ENCODE measurements at regions of chr2 and their contacts with region 1.

Region 1: GRCh38 chr2:170815746-170816503 is 762 bp upstream of the GAD1 start:
- DNase-seq: peak; percentile 57
- ATAC-seq: peak; percentile 78
- H3K4me3 ChIP-seq: peak overlapping the region; percentile 53 to 67
- H3K27ac ChIP-seq: no peak overlapping the region; the same call in 1 of the 2 replicates
- H3K4me1 ChIP-seq: peaks cover 3 to 25% of the 10 kb centered on the region in 2 experiments; a peak in 3 of 4 replicates
- H3K27me3 ChIP-seq: no peaks in the 10 kb centered on the region
- CTCF ChIP-seq: peak; percentile 79 to 92 (median 83)
- POLR2A ChIP-seq: no peak
- RAD21 ChIP-seq: peak; percentile 94

Region 2: GRCh38 chr2:170235860-170236679 is 579.9 kb before region 1 on chr2:
- CTCF ChIA-PET with region 1: interaction called, 6 read pairs
- POLR2A ChIA-PET with region 1: no interaction called
- RAD21 ChIA-PET with region 1: no interaction called
- intact Hi-C with region 1: loop called (anchors 1 kb)
- DNase-seq: peak; percentile 60
- ATAC-seq: peak; percentile 76
- H3K4me3 ChIP-seq: no peak overlapping the region
- H3K27ac ChIP-seq: no peak overlapping the region
- H3K4me1 ChIP-seq: peaks cover 3 to 12% of the 10 kb centered on the region in 2 experiments; a peak in 2 of 4 replicates
- H3K27me3 ChIP-seq: peaks cover 19% of the 10 kb centered on the region
- CTCF ChIP-seq: peak; percentile 53 to 81 (median 67); a peak in 5 of 6 replicates
- POLR2A ChIP-seq: no peak
- RAD21 ChIP-seq: peak; percentile 84

Region 3: DNA sequence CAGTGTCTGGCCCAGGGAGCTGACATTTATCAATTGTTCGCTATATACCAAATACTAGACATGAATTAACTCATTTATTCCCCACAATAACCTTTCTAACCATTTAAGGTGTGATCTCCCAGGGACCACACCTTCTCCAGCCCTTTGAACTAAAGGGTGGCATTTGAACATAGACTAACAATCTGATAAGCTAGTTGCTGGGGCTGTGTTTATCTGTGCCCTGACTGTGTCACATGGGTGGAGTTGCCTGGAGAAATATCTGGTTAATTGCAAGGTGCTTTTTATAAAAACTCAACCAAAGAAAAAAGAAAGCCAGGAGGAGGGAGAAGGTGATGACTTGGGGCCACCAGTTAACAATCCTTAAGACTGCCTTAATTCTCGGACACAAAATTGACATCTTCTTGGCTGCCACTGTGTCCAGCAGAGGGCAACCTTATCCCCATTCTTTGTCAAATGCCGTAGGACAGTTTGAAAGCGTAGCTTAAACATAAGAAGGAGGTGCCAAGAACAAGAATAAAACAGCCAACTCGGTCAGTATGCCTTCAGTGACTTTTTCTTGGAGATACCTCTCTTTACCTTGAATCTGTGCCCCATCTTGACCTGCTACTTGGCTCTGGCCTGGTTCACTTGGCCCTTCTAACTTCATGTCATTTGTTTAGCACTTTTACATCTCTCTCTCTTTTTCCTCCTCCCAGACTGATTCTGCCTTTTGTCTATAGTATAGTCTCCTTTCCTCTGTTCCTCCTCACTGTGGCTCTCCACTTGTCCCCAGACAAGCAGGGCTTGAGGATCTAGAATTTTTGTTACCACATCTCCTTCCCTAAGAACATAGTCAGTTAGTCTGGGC is 454.6 kb before region 1 on chr2:
- CTCF ChIA-PET with region 1: interaction called, 45 read pairs
- POLR2A ChIA-PET with region 1: no interaction called
- RAD21 ChIA-PET with region 1: interaction called in 1 of 2 experiments, 4 read pairs
- intact Hi-C with region 1: loop called (anchors 5 kb)
- DNase-seq: peak; percentile 47
- ATAC-seq: peak; percentile 98
- H3K4me3 ChIP-seq: no peak overlapping the region
- H3K27ac ChIP-seq: no peak overlapping the region
- H3K4me1 ChIP-seq: peaks cover 0 to 6% of the 10 kb centered on the region in 2 experiments; a peak in 1 of 4 replicates
- H3K27me3 ChIP-seq: peaks cover 11% of the 10 kb centered on the region; the same call in 1 of the 2 replicates
- CTCF ChIP-seq: peak; percentile 75 to 89 (median 83)
- POLR2A ChIP-seq: no peak
- RAD21 ChIP-seq: peak; percentile 72

Region 4: GRCh38 chr2:170377500-170378207 is 438.3 kb before region 1 on chr2:
- CTCF ChIA-PET with region 1: interaction called, 24 read pairs
- POLR2A ChIA-PET with region 1: interaction called, 4 read pairs
- RAD21 ChIA-PET with region 1: interaction called in 1 of 2 experiments, 4 read pairs
- intact Hi-C with region 1: no loop called
- DNase-seq: no peak
- ATAC-seq: no peak
- H3K4me3 ChIP-seq: no peak overlapping the region
- H3K27ac ChIP-seq: no peak overlapping the region
- H3K4me1 ChIP-seq: no peaks in the 10 kb centered on the region
- H3K27me3 ChIP-seq: no peaks in the 10 kb centered on the region
- CTCF ChIP-seq: peak; percentile 22 to 40 (median 25); a peak in 3 of 6 replicates
- POLR2A ChIP-seq: no peak
- RAD21 ChIP-seq: peak; percentile 44; the same call in 1 of the 2 replicates

Region 5: DNA sequence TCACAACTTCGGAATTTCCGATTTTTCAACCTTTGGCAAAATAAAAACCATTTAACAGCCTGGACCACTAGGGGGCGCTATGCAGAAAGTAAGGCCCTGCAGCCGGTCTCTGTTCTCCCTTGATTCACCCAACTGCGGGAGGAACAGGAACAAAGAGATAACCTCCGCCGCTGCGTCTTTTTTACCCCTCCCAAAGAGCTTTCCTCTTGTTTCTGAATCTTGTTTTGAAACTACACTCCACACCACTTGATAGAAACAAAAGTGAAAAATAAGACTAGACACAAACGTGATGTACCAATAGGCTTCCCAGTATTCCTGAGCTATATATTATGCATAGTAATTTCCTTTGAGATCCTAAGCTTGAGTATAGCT is 406.8 kb before region 1 on chr2:
- CTCF ChIA-PET with region 1: interaction called, 16 read pairs
- POLR2A ChIA-PET with region 1: interaction called, 3 read pairs
- RAD21 ChIA-PET with region 1: interaction called in 1 of 2 experiments, 4 read pairs
- intact Hi-C with region 1: loop called (anchors 1 kb)
- DNase-seq: peak; percentile 68
- ATAC-seq: peak; percentile 91
- H3K4me3 ChIP-seq: peak overlapping the region; percentile 27 to 44
- H3K27ac ChIP-seq: no peak overlapping the region
- H3K4me1 ChIP-seq: peaks cover 0 to 7% of the 10 kb centered on the region in 2 experiments; a peak in 1 of 4 replicates
- H3K27me3 ChIP-seq: no peaks in the 10 kb centered on the region
- CTCF ChIP-seq: peak; percentile 73 to 92 (median 79); a peak in 5 of 6 replicates
- POLR2A ChIP-seq: no peak
- RAD21 ChIP-seq: peak; percentile 79

Region 6: DNA sequence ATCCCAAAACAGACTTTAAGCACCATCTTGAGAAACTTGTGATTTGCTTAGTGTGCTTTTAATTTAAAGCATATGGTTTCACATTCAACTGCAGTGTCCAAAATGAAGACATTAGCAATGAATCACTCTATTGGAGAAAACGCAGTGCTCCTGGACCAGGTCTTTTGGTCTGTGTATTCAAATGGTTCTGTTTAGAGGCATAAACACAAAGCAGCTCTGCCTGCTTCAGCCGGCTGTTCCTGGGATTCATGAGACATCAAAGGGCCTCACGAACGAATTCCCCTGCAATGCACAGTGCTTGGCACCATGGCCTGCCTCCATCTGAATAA is 217.9 kb before region 1 on chr2:
- CTCF ChIA-PET with region 1: no interaction called
- POLR2A ChIA-PET with region 1: no interaction called
- RAD21 ChIA-PET with region 1: no interaction called
- intact Hi-C with region 1: no loop called
- DNase-seq: no peak
- ATAC-seq: no peak
- H3K4me3 ChIP-seq: no peak overlapping the region
- H3K27ac ChIP-seq: no peak overlapping the region
- H3K4me1 ChIP-seq: no peaks in the 10 kb centered on the region
- H3K27me3 ChIP-seq: no peaks in the 10 kb centered on the region
- CTCF ChIP-seq: no peak
- POLR2A ChIP-seq: no peak
- RAD21 ChIP-seq: no peak

Region 7: GRCh38 chr2:170873035-170873692 is 57.2 kb after region 1 on chr2:
- CTCF ChIA-PET with region 1: interaction called, 6 read pairs
- POLR2A ChIA-PET with region 1: interaction called, 3 read pairs
- RAD21 ChIA-PET with region 1: interaction called in 1 of 2 experiments, 5 read pairs
- intact Hi-C with region 1: loop called (anchors 2 kb)
- DNase-seq: peak; percentile 63
- ATAC-seq: peak; percentile 99
- H3K4me3 ChIP-seq: peak overlapping the region; percentile 15 to 45; a peak in 3 of 4 replicates
- H3K27ac ChIP-seq: no peak overlapping the region
- H3K4me1 ChIP-seq: peaks cover 0 to 13% of the 10 kb centered on the region in 2 experiments; a peak in 2 of 4 replicates
- H3K27me3 ChIP-seq: no peaks in the 10 kb centered on the region
- CTCF ChIP-seq: peak; percentile 71 to 97 (median 96)
- POLR2A ChIP-seq: no peak
- RAD21 ChIP-seq: peak; percentile 67

Measured in HCT116 (cell line).